ENCODE measurements at regions of chr3 and their contacts with region 1.

Region 1: GRCh38 chr3:100260685-100261484 is at the start of gene TBC1D23:
- DNase-seq: peak; percentile 98
- ATAC-seq: peak; percentile 100
- H3K4me3 Mint-ChIP-seq: peak within 1 kb of the TSS; percentile 91
- H3K27ac Mint-ChIP-seq: peak within 1 kb of the TSS; percentile 96
- H3K4me1 Mint-ChIP-seq: peaks cover 58% of the 10 kb centered on the region
- H3K27me3 Mint-ChIP-seq: no peaks in the 10 kb centered on the region
- total RNA-seq, gene TBC1D23: 17.6 to 19.4 TPM

Region 2: DNA sequence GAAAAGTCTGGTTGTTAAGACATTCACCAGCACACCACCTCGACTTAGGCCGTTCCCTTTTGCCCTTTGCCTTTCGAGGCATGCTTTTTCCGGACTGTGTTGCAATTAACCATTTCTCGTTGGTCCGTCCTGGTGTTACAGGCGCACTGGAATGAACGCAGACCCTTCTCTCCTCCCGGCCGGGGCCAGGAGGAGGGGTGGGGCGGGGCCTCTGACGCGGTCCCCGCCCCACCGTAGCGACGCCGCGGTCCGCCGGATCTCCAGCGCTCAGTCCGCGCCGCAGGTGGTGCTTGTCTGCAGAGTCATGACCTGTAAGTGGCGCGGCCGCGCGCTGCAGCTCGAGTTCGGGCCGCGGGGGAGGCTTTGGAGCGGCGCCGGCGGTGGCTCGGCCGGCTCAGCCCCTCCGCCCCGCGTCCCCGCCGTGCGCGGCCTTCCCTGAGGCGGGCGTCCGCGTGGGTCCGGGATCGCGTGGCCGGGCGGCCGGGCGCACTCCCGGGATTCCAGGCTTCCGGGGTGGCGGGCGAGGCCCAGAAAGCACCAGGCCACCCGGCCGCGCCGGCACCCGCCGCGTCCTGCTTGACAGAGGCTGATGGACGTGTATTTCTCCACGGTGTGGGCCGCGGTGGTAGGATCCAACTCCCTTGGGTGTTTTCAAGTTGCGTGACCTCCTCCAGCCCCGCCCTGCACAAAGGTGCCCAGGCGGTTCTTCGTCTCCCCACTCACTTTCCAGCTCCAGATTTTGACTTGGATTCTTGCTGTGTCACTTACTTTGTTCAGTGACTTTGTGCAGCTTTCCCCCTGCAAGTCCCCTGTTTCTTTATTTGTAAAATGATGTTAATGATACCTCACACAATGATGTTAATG is 73.8 kb after region 1 on chr3 and contains the start of gene NIT2:
- CTCF ChIA-PET with region 1: interaction called, 5 read pairs
- POLR2A ChIA-PET with region 1: no interaction called
- intact Hi-C with region 1: loop called in 1 of 2 experiments (anchors 2 kb)
- DNase-seq: peak; percentile 90
- ATAC-seq: peak; percentile 98
- H3K4me3 Mint-ChIP-seq: peak within 1 kb of the TSS; percentile 92
- H3K27ac Mint-ChIP-seq: peak within 1 kb of the TSS; percentile 96
- H3K4me1 Mint-ChIP-seq: peaks cover 24% of the 10 kb centered on the region
- H3K27me3 Mint-ChIP-seq: no peaks in the 10 kb centered on the region
- total RNA-seq, gene NIT2: 59.1 to 70.8 TPM

Measured in activated CD4-positive, alpha-beta T cell treated with anti-CD3 and anti-CD28 coated beads for 36 hours (primary cell).